Activated B cell treated with CpG ODN at 0.5 μM for 24 hours (primary cell): ENCODE measurements at regions of chr12 and their contacts with region 1.

Region 1: DNA sequence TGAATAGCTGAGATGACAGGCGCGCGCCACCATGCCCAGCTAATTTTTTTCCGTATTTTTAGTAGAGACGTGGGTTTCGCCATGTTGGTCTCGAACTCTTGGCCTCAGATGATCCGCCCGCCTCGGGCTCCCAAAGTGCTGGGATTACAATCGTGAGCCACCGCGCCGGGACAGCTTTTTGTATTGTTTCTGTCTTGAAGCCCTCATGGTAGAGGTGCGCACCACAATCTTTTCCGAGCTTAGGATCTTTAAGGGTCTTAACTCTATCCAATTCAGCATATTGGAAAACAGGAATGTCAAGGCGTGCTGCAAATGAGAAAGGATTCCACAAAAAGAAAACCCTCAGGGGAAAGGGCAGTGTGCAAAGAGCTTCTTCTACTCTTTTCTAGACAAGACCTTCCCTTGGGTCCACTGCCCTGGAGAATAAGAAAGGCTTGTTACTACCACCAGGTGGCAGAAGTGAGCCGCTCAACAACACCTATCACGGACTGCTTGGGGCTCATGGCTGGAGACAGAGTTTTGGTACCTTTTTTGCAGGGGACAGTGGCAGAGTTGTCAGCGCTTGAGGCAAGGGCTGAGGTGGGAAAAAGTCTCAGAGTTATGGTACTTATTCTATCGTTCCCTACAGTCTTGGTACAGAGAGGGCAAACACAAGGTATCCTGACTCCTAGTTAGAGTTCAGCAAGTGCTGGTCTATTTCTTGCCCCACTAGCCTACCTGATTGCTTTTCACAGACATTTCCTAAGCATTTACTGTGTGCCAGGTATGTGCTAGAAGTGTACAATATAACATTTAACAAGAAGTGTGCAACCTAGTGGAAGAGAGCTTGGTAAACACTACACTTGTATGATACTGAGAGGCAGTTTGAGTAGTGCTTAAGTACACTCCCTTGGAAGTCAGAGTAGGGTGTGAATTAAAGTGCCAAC is 16.4 kb upstream of the SP7 start:
- DNase-seq: peak; percentile 56
- ATAC-seq: peak; percentile 100
- H3K4me3 Mint-ChIP-seq: no peak overlapping the region
- H3K27ac Mint-ChIP-seq: peak overlapping the region; percentile 37
- H3K4me1 Mint-ChIP-seq: peaks cover 4% of the 10 kb centered on the region
- H3K27me3 Mint-ChIP-seq: no peaks in the 10 kb centered on the region
- CTCF ChIP-seq: no peak

Region 2: GRCh38 chr12:52634266-52635056 is 718.1 kb before region 1 on chr12:
- CTCF ChIA-PET with region 1: no interaction called
- POLR2A ChIA-PET with region 1: no interaction called
- intact Hi-C with region 1: no loop called
- DNase-seq: no peak
- ATAC-seq: no peak
- H3K4me3 Mint-ChIP-seq: no peak overlapping the region
- H3K27ac Mint-ChIP-seq: no peak overlapping the region
- H3K4me1 Mint-ChIP-seq: no peaks in the 10 kb centered on the region
- H3K27me3 Mint-ChIP-seq: peaks cover 11% of the 10 kb centered on the region
- CTCF ChIP-seq: no peak

Region 3: GRCh38 chr12:52799062-52799761 is 553.4 kb before region 1 on chr12:
- CTCF ChIA-PET with region 1: no interaction called
- POLR2A ChIA-PET with region 1: no interaction called
- intact Hi-C with region 1: no loop called
- DNase-seq: no peak
- ATAC-seq: no peak
- H3K4me3 Mint-ChIP-seq: no peak overlapping the region
- H3K27ac Mint-ChIP-seq: no peak overlapping the region
- H3K4me1 Mint-ChIP-seq: no peaks in the 10 kb centered on the region
- H3K27me3 Mint-ChIP-seq: peaks cover 6% of the 10 kb centered on the region
- CTCF ChIP-seq: no peak

Region 4: GRCh38 chr12:53327435-53328042 is 25.1 kb before region 1 on chr12:
- CTCF ChIA-PET with region 1: interaction called, 23 read pairs
- POLR2A ChIA-PET with region 1: interaction called, 4 read pairs
- intact Hi-C with region 1: no loop called
- DNase-seq: no peak
- ATAC-seq: no peak
- H3K4me3 Mint-ChIP-seq: peak overlapping the region; percentile 22
- H3K27ac Mint-ChIP-seq: no peak overlapping the region
- H3K4me1 Mint-ChIP-seq: peaks cover 19% of the 10 kb centered on the region
- H3K27me3 Mint-ChIP-seq: peaks cover 29% of the 10 kb centered on the region
- CTCF ChIP-seq: no peak

Region 5: GRCh38 chr12:53414756-53415417 is 62.3 kb after region 1 on chr12:
- CTCF ChIA-PET with region 1: interaction called, 118 read pairs
- POLR2A ChIA-PET with region 1: interaction called, 7 read pairs
- intact Hi-C with region 1: loop called (anchors 1 kb)
- DNase-seq: no peak
- ATAC-seq: no peak
- H3K4me3 Mint-ChIP-seq: no peak overlapping the region
- H3K27ac Mint-ChIP-seq: peak overlapping the region; percentile 35
- H3K4me1 Mint-ChIP-seq: peaks cover 60% of the 10 kb centered on the region
- H3K27me3 Mint-ChIP-seq: no peaks in the 10 kb centered on the region
- CTCF ChIP-seq: no peak

Region 6: GRCh38 chr12:53427905-53428594 is 75.5 kb after region 1 on chr12:
- CTCF ChIA-PET with region 1: interaction called, 118 read pairs
- POLR2A ChIA-PET with region 1: interaction called, 8 read pairs
- intact Hi-C with region 1: no loop called
- DNase-seq: no peak
- ATAC-seq: peak; percentile 57
- H3K4me3 Mint-ChIP-seq: no peak overlapping the region
- H3K27ac Mint-ChIP-seq: no peak overlapping the region
- H3K4me1 Mint-ChIP-seq: no peaks in the 10 kb centered on the region
- H3K27me3 Mint-ChIP-seq: no peaks in the 10 kb centered on the region
- CTCF ChIP-seq: no peak

Region 7: DNA sequence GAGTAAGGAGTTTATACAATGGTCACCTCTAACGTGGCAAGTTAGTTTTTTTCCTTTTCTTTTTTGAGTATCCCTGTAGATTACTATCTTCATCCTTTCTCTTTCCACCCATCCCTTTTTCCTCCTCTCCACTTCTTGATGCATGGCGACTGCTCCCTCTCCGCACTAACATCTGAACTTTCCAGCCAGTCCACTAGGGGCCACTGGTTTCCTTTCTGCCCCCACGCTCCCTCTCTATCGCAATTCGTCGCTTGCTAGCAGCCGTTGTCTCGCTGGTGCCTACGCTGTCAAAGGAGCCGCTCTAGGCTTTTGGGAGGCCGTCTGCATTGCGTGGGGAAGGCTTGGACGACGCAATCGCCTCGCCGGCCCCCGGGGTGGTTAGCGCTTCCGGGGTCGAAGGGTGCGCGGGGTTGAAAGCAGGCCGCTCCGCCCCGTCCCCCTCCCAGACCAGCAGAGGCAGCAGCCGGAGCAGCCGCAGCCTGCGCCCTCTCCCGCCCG is 99.1 kb after region 1 on chr12 and contains the start of gene PCBP2:
- CTCF ChIA-PET with region 1: interaction called, 3 read pairs
- POLR2A ChIA-PET with region 1: interaction called, 4 read pairs
- intact Hi-C with region 1: loop called (anchors 1 kb)
- DNase-seq: peak; percentile 92
- ATAC-seq: peak; percentile 92
- H3K4me3 Mint-ChIP-seq: peak within 1 kb of the TSS; percentile 99
- H3K27ac Mint-ChIP-seq: peak within 1 kb of the TSS; percentile 99
- H3K4me1 Mint-ChIP-seq: peaks cover 30% of the 10 kb centered on the region
- H3K27me3 Mint-ChIP-seq: no peaks in the 10 kb centered on the region
- CTCF ChIP-seq: no peak
- total RNA-seq, gene PCBP2: 841 and 853 TPM in 2 replicates